Aorta (tissue), 5 donors: ENCODE measurements at regions of chr1 and their contacts with region 1.

Region 1: GRCh38 chr1:89598450-89599331 is 34.2 kb upstream of the LRRC8C start:
- DNase-seq: no peak
- ATAC-seq: no peak
- H3K4me3 ChIP-seq: no peak overlapping the region
- H3K27ac ChIP-seq: no peak overlapping the region
- H3K4me1 ChIP-seq: no peaks in the 10 kb centered on the region
- H3K27me3 ChIP-seq: no peaks in the 10 kb centered on the region

Region 2: GRCh38 chr1:89483010-89483756 is 115.5 kb before region 1 on chr1:
- intact Hi-C with region 1: loop called in 1 of 2 experiments (anchors 5 kb)
- DNase-seq: peak in 1 of 2 donors; percentile 77
- ATAC-seq: peak; percentile 79
- H3K4me3 ChIP-seq: no peak overlapping the region
- H3K27ac ChIP-seq: no peak overlapping the region
- H3K4me1 ChIP-seq: no peaks in the 10 kb centered on the region
- H3K27me3 ChIP-seq: no peaks in the 10 kb centered on the region

Region 3: DNA sequence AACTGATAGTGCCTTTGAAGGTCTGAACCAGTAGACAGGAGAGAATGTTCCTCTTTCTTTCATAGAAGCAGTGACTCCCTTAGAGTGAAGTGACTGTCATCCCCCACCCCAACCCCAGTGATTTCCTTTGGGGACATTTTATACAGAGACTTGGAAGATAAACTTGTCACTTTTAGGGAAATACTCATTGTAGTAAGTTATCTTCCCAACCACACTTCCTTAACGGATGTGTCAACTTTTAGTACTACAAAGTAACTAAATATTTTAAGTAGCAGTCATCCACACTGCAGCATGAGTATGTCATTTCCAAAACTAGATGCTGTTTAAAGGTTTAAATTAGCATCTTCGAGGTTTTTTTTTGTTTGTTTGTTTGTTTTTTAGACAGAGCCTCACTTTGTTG is 60.3 kb before region 1 on chr1:
- intact Hi-C with region 1: loop called in 1 of 2 experiments (anchors 10 kb)
- DNase-seq: no peak
- ATAC-seq: no peak
- H3K4me3 ChIP-seq: no peak overlapping the region
- H3K27ac ChIP-seq: no peak overlapping the region
- H3K4me1 ChIP-seq: no peaks in the 10 kb centered on the region
- H3K27me3 ChIP-seq: no peaks in the 10 kb centered on the region